Panc1 (cell line): ENCODE measurements at regions of chr2 and their contacts with region 1.

Region 1: DNA sequence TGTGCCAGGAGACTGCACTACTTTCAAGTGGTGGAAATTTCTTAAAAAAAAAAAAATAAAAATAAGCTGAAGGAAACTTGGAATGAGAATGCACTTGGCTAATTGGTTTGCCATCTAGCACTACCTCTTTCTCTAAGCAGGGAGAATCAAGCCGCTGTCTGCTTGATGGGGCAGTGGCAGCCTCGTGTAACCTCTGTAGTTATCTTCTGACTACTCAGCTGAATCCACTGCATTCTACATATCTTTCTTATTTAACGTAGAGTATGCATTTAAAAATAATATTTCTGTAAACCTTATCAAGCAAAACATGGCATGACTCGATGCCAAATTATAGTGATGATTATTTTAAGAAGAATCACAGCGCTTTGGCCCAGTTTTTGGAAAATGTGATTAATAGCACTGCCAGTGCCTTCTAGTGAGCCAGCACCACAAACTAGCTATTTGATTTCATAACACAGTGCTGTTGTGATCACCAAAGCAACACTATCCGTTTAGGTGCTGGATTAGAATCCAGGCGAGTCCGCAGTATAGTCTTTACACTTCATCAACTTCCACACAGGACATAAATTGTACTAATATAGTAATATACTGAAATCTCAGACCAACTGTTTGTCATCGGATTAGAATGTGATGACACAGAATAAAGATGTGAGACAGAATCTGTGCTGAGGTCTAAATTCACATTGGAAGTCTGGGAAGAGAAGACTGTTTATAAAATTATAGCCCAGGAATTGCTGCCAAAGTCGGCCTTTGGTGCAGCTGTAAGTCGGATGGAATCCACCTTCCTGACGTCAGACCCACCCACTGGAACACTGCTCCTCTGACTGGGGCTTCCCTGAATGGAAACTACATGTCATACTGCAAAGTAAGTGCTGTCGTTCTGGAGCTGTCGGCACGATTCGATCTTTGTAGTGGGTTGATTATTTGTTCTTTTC is 136.5 kb upstream of the ETAA1 start:
- DNase-seq: peak; percentile 89
- ATAC-seq: no peak
- H3K4me3 ChIP-seq: no peak overlapping the region
- H3K27ac ChIP-seq: no peak overlapping the region
- H3K4me1 ChIP-seq: no peaks in the 10 kb centered on the region
- H3K27me3 ChIP-seq: no peaks in the 10 kb centered on the region
- CTCF ChIP-seq: no peak

Region 2: GRCh38 chr2:67065046-67065445 is 195.6 kb before region 1 on chr2:
- CTCF ChIA-PET with region 1: no interaction called
- POLR2A ChIA-PET with region 1: no interaction called
- in situ Hi-C with region 1: no loop called
- intact Hi-C with region 1: no loop called
- DNase-seq: no peak
- ATAC-seq: no peak
- H3K4me3 ChIP-seq: no peak overlapping the region
- H3K27ac ChIP-seq: no peak overlapping the region
- H3K4me1 ChIP-seq: no peaks in the 10 kb centered on the region
- H3K27me3 ChIP-seq: no peaks in the 10 kb centered on the region
- CTCF ChIP-seq: no peak

Region 3: DNA sequence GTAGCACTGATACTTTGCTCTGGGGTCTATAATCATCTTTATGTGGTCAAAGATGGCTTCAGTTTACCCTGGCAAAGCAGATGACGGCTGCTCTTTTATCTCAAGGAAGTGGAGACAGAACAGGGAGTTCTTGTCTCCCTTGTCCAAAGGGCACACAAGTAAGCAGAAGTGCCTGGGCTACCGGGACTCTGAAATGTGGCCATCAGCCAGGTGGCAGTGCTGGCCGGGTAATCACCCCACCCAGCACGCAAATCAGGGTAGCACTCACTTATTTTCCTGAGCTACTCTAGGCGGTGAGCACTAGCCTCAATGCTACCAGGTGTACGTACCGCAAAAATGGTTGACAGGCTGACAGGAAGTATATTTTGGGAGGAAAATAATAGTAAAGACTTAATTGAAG is 16.8 kb after region 1 on chr2:
- CTCF ChIA-PET with region 1: no interaction called
- POLR2A ChIA-PET with region 1: no interaction called
- in situ Hi-C with region 1: no loop called
- intact Hi-C with region 1: no loop called
- DNase-seq: no peak
- ATAC-seq: no peak
- H3K4me3 ChIP-seq: no peak overlapping the region
- H3K27ac ChIP-seq: no peak overlapping the region
- H3K4me1 ChIP-seq: no peaks in the 10 kb centered on the region
- H3K27me3 ChIP-seq: no peaks in the 10 kb centered on the region
- CTCF ChIP-seq: no peak

Region 4: GRCh38 chr2:68009526-68009925 is 748.9 kb after region 1 on chr2:
- CTCF ChIA-PET with region 1: no interaction called
- POLR2A ChIA-PET with region 1: interaction called, 10 read pairs
- in situ Hi-C with region 1: no loop called
- intact Hi-C with region 1: no loop called
- DNase-seq: no peak
- ATAC-seq: no peak
- H3K4me3 ChIP-seq: no peak overlapping the region
- H3K27ac ChIP-seq: no peak overlapping the region
- H3K4me1 ChIP-seq: no peaks in the 10 kb centered on the region
- H3K27me3 ChIP-seq: no peaks in the 10 kb centered on the region
- CTCF ChIP-seq: no peak